Common myeloid progenitor, CD34-positive (primary cell): ENCODE measurements at regions of chr7 and their contacts with region 1.

Region 1: DNA sequence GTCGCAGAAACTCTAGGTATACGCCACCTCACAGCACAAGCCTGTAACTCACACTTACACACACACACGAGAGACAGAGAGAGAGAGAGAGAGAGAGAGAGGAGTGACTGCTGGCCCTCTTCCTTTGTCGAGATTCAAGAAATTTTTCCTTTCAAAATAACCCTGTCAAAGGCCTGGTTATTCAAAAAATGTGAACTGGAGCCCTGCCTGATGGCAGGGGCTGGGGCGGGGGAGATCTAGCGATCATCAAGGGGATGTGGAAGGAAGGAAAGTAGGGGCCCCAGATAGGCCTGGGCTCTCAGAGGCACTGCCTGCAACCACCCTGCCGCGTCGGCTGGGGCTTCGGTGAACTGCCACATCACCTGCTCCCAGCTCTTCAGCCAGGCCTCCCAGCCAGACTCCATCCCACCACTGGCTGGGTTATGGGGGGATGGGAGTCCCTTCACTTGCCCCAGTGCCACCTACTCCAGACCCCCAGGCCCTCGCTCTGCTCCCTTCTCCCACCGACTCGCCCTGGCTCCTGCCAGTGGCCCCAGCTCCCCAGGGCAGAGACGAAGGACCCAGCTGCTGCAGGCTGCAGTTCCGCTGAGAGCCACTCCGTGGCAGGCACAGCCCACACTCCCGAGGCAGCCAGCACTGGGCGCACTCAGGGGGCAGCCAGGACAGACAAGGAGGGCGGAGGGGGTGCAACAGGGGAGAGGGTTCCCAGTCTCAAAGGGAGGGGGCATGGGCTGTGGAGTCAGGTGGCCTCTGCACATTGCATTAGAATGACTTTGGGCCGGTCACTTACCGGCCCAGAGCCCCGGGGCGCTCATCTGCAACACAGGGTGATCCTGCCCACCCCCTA is 15.3 kb downstream of the KCNH2 start:
- DNase-seq: peak; percentile 60 to 73 (median 69)
- H3K4me3 ChIP-seq: no peak overlapping the region
- H3K27ac ChIP-seq: peak overlapping the region in 1 of 2 experiments; percentile 49
- H3K4me1 ChIP-seq: peaks cover 0 to 38% (median 31%) of the 10 kb centered on the region in 4 experiments
- H3K27me3 ChIP-seq: peaks cover 0 to 40% (median 19%) of the 10 kb centered on the region in 5 experiments

Region 2: DNA sequence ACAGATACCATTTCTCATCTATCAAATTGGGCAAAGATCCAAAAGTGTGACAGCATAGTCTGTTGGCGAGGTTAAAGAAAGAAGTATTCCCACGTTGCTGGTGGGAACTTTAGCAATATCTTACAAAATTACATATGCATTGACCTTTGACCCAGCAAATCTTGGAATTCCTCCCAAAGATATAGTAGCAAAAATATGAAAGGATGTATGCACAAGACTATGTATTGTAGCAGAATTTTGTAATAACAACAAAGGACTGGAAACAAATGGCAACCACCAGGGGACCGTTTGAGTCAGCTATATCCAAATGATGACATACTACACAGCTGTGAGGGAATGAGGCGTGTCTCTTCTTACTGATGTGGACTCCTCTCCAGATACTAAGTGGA is 34.8 kb before region 1 on chr7:
- CTCF ChIA-PET with region 1: interaction called, 16 read pairs
- POLR2A ChIA-PET with region 1: no interaction called
- DNase-seq: peak in 2 of 3 donors; percentile 39 to 49
- H3K4me3 ChIP-seq: no peak overlapping the region
- H3K27ac ChIP-seq: no peak overlapping the region
- H3K4me1 ChIP-seq: peaks cover 0 to 28% (median 21%) of the 10 kb centered on the region in 4 experiments
- H3K27me3 ChIP-seq: no peaks in the 10 kb centered on the region

Region 3: GRCh38 chr7:150974468-150975391 is 12.0 kb after region 1 on chr7:
- CTCF ChIA-PET with region 1: interaction called, 215 read pairs
- POLR2A ChIA-PET with region 1: no interaction called
- DNase-seq: peak in 2 of 3 donors; percentile 78 to 83
- H3K4me3 ChIP-seq: peak overlapping the region; percentile 11 to 72 (median 60)
- H3K27ac ChIP-seq: peak overlapping the region in 1 of 2 experiments; percentile 4
- H3K4me1 ChIP-seq: peaks cover 0 to 38% (median 28%) of the 10 kb centered on the region in 4 experiments
- H3K27me3 ChIP-seq: peaks cover 0 to 78% (median 40%) of the 10 kb centered on the region in 5 experiments

Region 4: GRCh38 chr7:151008511-151009323 is 45.9 kb after region 1 on chr7:
- CTCF ChIA-PET with region 1: interaction called, 22 read pairs
- POLR2A ChIA-PET with region 1: no interaction called
- DNase-seq: peak in 2 of 3 donors; percentile 65 to 69
- H3K4me3 ChIP-seq: peak overlapping the region in 2 of 7 experiments; percentile 3 to 14
- H3K27ac ChIP-seq: peak overlapping the region in 1 of 2 experiments; percentile 44
- H3K4me1 ChIP-seq: peaks cover 0 to 36% (median 30%) of the 10 kb centered on the region in 4 experiments
- H3K27me3 ChIP-seq: peaks cover 0 to 38% (median 4%) of the 10 kb centered on the region in 5 experiments

Region 5: DNA sequence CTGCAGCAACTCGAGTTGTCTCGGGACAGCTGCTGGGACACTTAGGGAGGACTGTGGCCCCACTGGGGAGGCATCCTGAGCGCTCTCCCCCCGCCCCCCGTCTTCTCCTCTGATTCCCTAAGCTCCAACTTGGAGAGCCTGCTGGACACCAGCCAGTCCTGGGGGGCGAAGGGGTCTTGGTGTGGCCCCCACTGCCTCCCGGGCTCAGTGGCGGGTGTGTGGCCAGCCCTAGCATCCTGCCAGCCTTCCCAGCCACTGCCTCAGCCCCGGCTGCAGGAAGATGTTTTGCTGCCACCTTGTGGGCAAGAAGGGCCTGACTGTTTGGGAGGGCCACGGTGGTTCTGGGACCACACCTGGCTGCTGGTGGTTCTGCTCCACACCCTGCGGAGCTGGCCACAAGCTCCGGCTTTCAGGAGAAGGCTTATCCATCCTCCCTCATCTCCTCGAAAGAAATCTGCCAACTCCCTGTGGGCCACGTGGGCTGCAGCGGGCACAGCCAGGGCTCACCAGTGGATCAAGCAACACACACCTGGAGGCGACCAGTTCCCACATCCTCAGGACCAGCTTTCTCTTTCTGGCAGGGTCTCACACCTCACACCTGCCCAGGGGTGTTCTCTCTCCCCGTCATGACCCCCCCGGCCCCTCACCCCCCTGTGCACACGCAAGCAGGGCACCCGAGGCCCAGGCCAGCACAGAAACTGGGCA is 148.3 kb after region 1 on chr7:
- CTCF ChIA-PET with region 1: interaction called, 28 read pairs
- POLR2A ChIA-PET with region 1: no interaction called
- DNase-seq: peak; percentile 57 to 74 (median 67)
- H3K4me3 ChIP-seq: no peak overlapping the region
- H3K27ac ChIP-seq: no peak overlapping the region
- H3K4me1 ChIP-seq: peaks cover 0 to 12% (median 6%) of the 10 kb centered on the region in 4 experiments
- H3K27me3 ChIP-seq: peaks cover 0 to 22% (median 6%) of the 10 kb centered on the region in 5 experiments